ENCODE measurements at regions of chr6 and their contacts with region 1.

Region 1: GRCh38 chr6:10429638-10430427 is 15.0 kb upstream of the TFAP2A start:
- DNase-seq: no peak
- ATAC-seq: peak; percentile 70

Region 2: DNA sequence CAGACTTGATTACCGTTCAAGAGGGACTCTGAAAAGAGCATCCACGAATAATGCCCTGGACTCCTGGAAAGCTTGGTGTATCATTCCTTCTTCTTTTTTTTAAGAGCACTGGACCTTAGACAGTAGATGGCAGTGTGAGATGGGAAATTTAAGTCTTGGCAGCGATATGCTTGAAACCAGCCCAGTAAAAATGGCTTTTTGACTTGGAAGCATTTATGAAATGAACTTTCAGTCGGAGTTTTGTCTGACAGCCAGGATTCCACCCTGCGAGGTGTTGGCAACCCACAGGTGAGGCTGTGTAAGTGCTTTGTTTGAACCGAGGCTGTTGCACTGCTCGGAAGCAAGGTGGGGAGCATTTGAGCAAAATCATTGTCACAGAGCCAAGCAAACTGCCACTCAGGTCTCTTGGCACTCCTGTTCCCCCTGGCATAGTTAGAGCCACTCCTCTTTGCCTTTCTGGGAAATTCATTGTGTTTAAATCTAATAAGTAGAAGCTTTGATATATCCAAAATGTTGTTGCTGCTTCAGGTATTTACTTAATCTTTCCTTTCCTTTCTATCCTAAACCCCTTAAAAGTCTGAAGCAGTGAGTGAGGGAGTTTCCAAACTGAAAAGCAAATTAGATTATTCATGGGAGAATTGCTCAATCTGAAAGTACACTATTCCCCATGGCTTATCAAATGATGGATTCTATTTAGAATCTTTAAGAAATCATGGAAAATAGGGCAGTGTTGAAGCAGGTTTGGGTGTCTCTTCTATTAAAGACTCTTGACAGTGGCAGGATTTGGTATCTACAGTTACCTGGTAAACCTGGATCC is 1721.7 kb before region 1 on chr6:
- intact Hi-C with region 1: loop called (anchors 10 kb)
- DNase-seq: no peak
- ATAC-seq: peak; percentile 87

Region 3: DNA sequence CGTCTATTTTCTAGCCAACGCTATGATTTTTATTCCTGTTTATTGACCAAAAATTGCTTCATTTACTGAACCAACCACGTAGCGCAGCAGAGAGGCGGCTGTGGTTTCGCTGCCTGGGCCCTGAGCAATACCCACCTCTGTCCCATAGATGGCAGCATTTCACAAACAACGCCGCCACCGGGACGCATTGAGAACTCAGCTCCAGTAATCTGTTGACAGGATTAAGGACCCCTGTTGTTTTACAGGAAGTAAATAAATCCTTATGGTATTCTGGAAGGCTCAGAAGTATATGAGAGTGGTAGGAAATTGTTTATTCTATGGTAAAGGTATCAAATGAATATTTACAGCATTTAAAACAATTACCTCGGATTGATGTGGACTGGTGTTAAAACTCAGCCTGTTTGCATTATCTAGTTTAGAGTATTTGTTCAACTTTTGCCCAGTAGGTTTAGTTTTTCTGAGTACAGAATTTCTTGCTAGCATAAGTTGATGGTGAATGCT is 1446.6 kb before region 1 on chr6:
- intact Hi-C with region 1: loop called (anchors 5 kb)
- DNase-seq: peak; percentile 61
- ATAC-seq: peak; percentile 78

Region 4: GRCh38 chr6:9250852-9251251 is 1179.0 kb before region 1 on chr6:
- intact Hi-C with region 1: loop called (anchors 5 kb)
- DNase-seq: no peak
- ATAC-seq: peak; percentile 59

Region 5: DNA sequence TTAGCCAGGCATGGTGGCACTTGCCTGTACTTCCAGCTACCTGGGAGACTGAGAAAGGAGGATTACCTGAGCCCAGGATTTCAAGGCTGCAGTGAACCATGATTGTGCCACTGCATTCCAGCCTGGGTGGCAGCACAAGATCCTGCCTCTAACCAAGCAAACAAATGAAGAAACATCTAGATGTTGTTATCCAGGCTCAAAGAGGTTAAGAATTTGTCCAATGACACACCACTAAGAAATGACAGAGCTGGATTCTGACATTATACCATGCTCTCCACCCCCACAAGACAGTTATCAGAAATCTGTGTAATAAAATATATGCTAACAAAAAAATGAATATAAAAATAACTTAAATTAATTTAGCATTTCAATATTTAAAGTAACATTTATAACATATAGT is 1069.0 kb before region 1 on chr6:
- intact Hi-C with region 1: no loop called
- DNase-seq: no peak
- ATAC-seq: no peak

Region 6: DNA sequence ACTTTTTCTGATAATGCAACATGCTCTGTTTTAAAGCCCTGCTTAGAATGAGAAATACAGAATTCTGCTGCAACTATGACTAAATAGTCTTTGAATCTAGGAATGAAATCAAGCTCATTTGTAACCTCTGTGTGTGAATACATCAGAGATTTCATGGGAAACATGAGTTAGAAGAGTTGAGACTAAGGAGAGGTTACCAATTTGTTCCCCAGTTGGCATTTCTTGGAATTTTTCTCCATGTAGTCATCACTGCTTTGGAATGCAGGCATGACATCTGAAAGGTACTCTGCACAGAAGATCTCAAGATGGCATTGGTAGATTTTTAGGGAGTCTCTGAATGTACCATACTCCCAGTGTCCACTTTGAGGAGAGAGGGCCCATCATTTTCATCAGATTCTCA is 252.1 kb before region 1 on chr6:
- intact Hi-C with region 1: no loop called
- DNase-seq: no peak
- ATAC-seq: no peak

Region 7: GRCh38 chr6:10338151-10338550 is 91.7 kb before region 1 on chr6:
- intact Hi-C with region 1: no loop called
- DNase-seq: no peak
- ATAC-seq: no peak

Measured in Right ventricle myocardium superior (tissue), 1 donor.